Activated B cell treated with CpG ODN at 0.5 μM for 24 hours (primary cell): ENCODE measurements at regions of chrX and their contacts with region 1.

Region 1: GRCh38 chrX:118682258-118683014 is 45.0 kb upstream of the IL13RA1 start:
- DNase-seq: no peak
- ATAC-seq: no peak
- H3K4me3 Mint-ChIP-seq: no peak overlapping the region
- H3K27ac Mint-ChIP-seq: no peak overlapping the region
- H3K4me1 Mint-ChIP-seq: peaks cover 7% of the 10 kb centered on the region
- H3K27me3 Mint-ChIP-seq: no peaks in the 10 kb centered on the region
- CTCF ChIP-seq: no peak

Region 2: GRCh38 chrX:118644378-118644777 is 38.1 kb before region 1 on chrX:
- CTCF ChIA-PET with region 1: no interaction called
- POLR2A ChIA-PET with region 1: interaction called, 11 read pairs
- intact Hi-C with region 1: no loop called
- DNase-seq: no peak
- ATAC-seq: no peak
- H3K4me3 Mint-ChIP-seq: no peak overlapping the region
- H3K27ac Mint-ChIP-seq: no peak overlapping the region
- H3K4me1 Mint-ChIP-seq: no peaks in the 10 kb centered on the region
- H3K27me3 Mint-ChIP-seq: no peaks in the 10 kb centered on the region
- CTCF ChIP-seq: no peak

Region 3: GRCh38 chrX:118702741-118703140 is 20.3 kb after region 1 on chrX:
- CTCF ChIA-PET with region 1: no interaction called
- POLR2A ChIA-PET with region 1: no interaction called
- intact Hi-C with region 1: no loop called
- DNase-seq: no peak
- ATAC-seq: no peak
- H3K4me3 Mint-ChIP-seq: no peak overlapping the region
- H3K27ac Mint-ChIP-seq: no peak overlapping the region
- H3K4me1 Mint-ChIP-seq: peaks cover 17% of the 10 kb centered on the region
- H3K27me3 Mint-ChIP-seq: no peaks in the 10 kb centered on the region
- CTCF ChIP-seq: no peak

Region 4: GRCh38 chrX:118726887-118727739 is 44.7 kb after region 1 on chrX and contains the start of gene IL13RA1:
- CTCF ChIA-PET with region 1: no interaction called
- POLR2A ChIA-PET with region 1: no interaction called
- intact Hi-C with region 1: loop called (anchors 2 kb)
- DNase-seq: peak; percentile 32
- ATAC-seq: peak; percentile 21
- H3K4me3 Mint-ChIP-seq: peak within 1 kb of the TSS; percentile 81
- H3K27ac Mint-ChIP-seq: peak within 1 kb of the TSS; percentile 59
- H3K4me1 Mint-ChIP-seq: peaks cover 71% of the 10 kb centered on the region
- H3K27me3 Mint-ChIP-seq: no peaks in the 10 kb centered on the region
- CTCF ChIP-seq: no peak
- total RNA-seq, gene IL13RA1: 13.9 and 15.0 TPM in 2 replicates